Psoas muscle (tissue), 8 donors: ENCODE measurements at regions of chrX and their contacts with region 1.

Region 1: GRCh38 chrX:24150051-24150790 is 692 bp downstream of the ZFX start:
- DNase-seq: peak; percentile 92 to 97
- ATAC-seq: peak; percentile 89 to 91 (median 90)
- H3K4me3 ChIP-seq: peak overlapping the region; percentile 87
- H3K27ac ChIP-seq: peak overlapping the region; percentile 98
- H3K4me1 ChIP-seq: peaks cover 61% of the 10 kb centered on the region
- H3K27me3 ChIP-seq: no peaks in the 10 kb centered on the region
- CTCF ChIP-seq: peak; percentile 60

Region 2: GRCh38 chrX:23907498-23908218 is 242.6 kb before region 1 on chrX and contains the starts of genes APOO and CXorf58:
- intact Hi-C with region 1: loop called in 1 of 2 experiments (anchors 10 kb)
- DNase-seq: peak; percentile 90 to 96
- ATAC-seq: peak; percentile 96 to 98 (median 97)
- H3K4me3 ChIP-seq: peak within 1 kb of the TSS; percentile 76
- H3K27ac ChIP-seq: peak within 1 kb of the TSS; percentile 82
- H3K4me1 ChIP-seq: no peaks in the 10 kb centered on the region
- H3K27me3 ChIP-seq: peaks cover 0 to 7% (median 0%) of the 10 kb centered on the region in 3 donors
- CTCF ChIP-seq: peak; percentile 72
- total RNA-seq, gene APOO: 29.7 to 78.5 (median 56.4) TPM
- total RNA-seq, gene CXorf58: 0.17 to 0.50 TPM in 2 of 4 donors, not detected in the others

Region 3: DNA sequence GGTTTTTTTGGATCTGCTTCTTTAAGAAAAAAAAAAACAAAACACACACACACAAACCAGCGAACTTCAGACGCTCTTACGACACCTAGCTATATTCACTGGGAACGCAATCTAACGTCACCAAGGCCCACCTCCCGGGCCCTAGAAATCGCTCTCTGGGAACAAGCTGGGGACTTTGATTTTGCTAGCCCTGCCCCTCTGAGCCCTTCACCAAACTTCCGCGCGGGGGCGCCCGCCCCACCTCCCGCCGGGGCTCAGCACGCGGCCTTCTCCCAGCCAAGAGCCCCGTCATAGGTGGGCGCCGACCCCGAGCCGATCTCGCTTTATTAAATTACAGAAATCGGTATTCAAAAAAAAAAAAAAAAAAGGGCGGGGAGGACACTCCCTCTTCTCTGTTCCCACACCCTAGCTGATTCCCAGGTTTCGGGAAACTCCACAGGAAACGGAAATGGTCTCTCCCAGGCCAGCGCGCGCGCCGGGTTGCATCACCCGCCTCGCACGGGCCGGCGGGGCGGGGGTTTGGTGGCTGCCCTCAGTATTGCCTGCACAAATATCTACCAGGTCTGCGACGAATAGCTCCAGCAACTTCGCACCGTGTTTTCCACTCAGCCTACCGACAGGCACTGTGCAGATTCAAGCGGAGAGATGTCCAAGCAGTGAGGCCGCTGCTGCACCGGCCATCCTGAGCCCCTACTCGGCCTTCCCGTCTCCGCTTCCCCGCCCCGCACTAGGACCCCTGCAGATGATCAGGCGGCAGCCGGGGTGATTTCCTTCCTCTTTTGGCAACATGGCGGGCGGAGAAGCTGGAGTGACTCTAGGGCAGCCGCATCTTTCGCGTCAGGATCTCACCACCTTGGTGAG is 95.8 kb before region 1 on chrX and contains the start of gene EIF2S3:
- intact Hi-C with region 1: loop called (anchors 1 to 2 kb)
- DNase-seq: peak; percentile 92 to 95
- ATAC-seq: peak; percentile 96 to 97 (median 97)
- H3K4me3 ChIP-seq: no peak within 1 kb of the TSS
- H3K27ac ChIP-seq: peak within 1 kb of the TSS; percentile 92
- H3K4me1 ChIP-seq: no peaks in the 10 kb centered on the region
- H3K27me3 ChIP-seq: no peaks in the 10 kb centered on the region
- CTCF ChIP-seq: peak; percentile 73
- total RNA-seq, gene EIF2S3: 96.6 to 130 (median 112) TPM

Region 4: GRCh38 chrX:24081661-24082264 is 68.5 kb before region 1 on chrX:
- intact Hi-C with region 1: loop called in 1 of 2 experiments (anchors 5 kb)
- DNase-seq: peak; percentile 27 to 71
- ATAC-seq: peak; percentile 44 to 84 (median 76)
- H3K4me3 ChIP-seq: no peak overlapping the region
- H3K27ac ChIP-seq: no peak overlapping the region
- H3K4me1 ChIP-seq: no peaks in the 10 kb centered on the region
- H3K27me3 ChIP-seq: no peaks in the 10 kb centered on the region
- CTCF ChIP-seq: peak; percentile 42

Region 5: GRCh38 chrX:24357106-24357505 is 206.9 kb after region 1 on chrX:
- intact Hi-C with region 1: no loop called
- DNase-seq: no peak
- ATAC-seq: no peak
- H3K4me3 ChIP-seq: no peak overlapping the region
- H3K27ac ChIP-seq: no peak overlapping the region
- H3K4me1 ChIP-seq: no peaks in the 10 kb centered on the region
- H3K27me3 ChIP-seq: peaks cover 0 to 11% (median 0%) of the 10 kb centered on the region in 3 donors
- CTCF ChIP-seq: no peak